Calu3 (cell line): ENCODE measurements at regions of chr7 and their contacts with region 1.

Region 1: DNA sequence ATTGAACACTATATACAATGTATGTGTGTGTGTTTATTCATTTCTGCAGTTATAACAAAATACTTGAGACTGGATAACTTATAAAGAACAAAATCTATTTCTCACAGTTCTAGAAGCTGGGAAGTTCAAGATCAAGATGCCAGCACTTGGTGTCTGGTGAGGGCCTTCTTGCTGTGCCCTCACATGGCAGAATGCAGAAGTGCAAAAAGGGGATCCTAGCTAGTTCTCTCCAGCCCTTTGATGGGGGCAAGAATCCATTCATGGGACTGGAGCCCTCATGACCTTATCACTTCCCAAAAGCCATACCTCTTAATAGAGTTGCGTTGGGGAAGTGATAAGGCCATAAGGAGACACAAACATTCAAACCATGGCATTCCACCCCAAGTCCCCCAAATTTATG is 8.4 kb downstream of the GRB10 start:
- DNase-seq: no peak
- H3K4me3 Mint-ChIP-seq: no peak overlapping the region
- H3K27ac Mint-ChIP-seq: no peak overlapping the region
- H3K4me1 Mint-ChIP-seq: peaks cover 54% of the 10 kb centered on the region
- H3K27me3 Mint-ChIP-seq: no peaks in the 10 kb centered on the region
- CTCF ChIP-seq: no peak

Region 2: GRCh38 chr7:50730446-50731400 is 43.6 kb before region 1 on chr7:
- CTCF ChIA-PET with region 1: interaction called, 3 read pairs
- intact Hi-C with region 1: loop called (anchors 2 kb)
- DNase-seq: peak; percentile 49
- H3K4me3 Mint-ChIP-seq: peak overlapping the region; percentile 45
- H3K27ac Mint-ChIP-seq: peak overlapping the region; percentile 55
- H3K4me1 Mint-ChIP-seq: peaks cover 53% of the 10 kb centered on the region
- H3K27me3 Mint-ChIP-seq: no peaks in the 10 kb centered on the region
- CTCF ChIP-seq: no peak

Region 3: GRCh38 chr7:50795831-50796230 is 21.5 kb after region 1 on chr7:
- CTCF ChIA-PET with region 1: no interaction called
- intact Hi-C with region 1: no loop called
- DNase-seq: peak; percentile 61
- H3K4me3 Mint-ChIP-seq: no peak overlapping the region
- H3K27ac Mint-ChIP-seq: no peak overlapping the region
- H3K4me1 Mint-ChIP-seq: peaks cover 26% of the 10 kb centered on the region
- H3K27me3 Mint-ChIP-seq: no peaks in the 10 kb centered on the region
- CTCF ChIP-seq: peak; percentile 59